ENCODE measurements at regions of chr14 and their contacts with region 1.

Region 1: GRCh38 chr14:81164167-81164774 is 56.5 kb downstream of the GTF2A1 start:
- DNase-seq: peak; percentile 83
- H3K4me3 Mint-ChIP-seq: no peak overlapping the region
- H3K27ac Mint-ChIP-seq: no peak overlapping the region
- H3K4me1 Mint-ChIP-seq: peaks cover 10% of the 10 kb centered on the region
- H3K27me3 Mint-ChIP-seq: no peaks in the 10 kb centered on the region

Region 2: DNA sequence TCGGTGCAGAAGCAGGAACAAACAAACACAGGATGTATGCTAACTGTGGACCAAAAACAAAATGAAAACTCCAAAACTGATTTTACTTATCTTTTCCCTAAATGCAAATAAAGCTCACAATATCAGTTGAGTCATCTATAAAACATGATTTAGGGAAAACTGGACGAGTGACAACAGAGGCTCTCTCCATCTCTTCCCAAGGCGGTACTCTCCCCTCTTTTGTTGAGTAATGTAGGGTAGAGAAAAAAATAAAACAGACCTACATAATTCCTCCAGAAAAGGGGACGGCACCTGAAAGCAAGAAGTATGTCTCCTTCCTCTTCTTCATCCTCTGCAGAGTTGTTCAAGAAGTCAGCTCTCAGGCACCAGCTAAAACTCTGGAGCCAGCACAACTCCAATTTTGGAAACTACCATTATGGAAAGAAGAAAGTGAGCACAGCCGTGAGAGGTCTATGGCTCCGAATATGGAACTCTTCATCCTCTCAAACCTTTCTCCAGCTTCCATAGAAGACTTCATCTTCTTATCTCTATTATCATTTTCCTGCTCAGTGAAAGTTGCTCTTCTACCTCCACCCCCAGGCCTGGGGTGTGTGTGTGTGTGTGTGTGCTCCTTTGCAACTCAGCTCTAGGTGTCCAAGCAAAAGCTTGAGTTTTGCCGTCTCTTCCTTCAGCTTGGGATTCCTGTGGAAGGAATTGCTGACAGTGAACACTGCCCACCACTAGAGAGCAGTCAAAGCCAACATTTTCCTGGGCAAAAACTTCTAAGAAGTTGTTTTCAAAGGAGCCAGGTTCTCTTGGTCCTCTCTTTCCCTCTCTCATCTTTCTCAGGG is 1108.4 kb before region 1 on chr14:
- CTCF ChIA-PET with region 1: no interaction called
- POLR2A ChIA-PET with region 1: no interaction called
- intact Hi-C with region 1: loop called (anchors 5 kb)
- DNase-seq: peak; percentile 9
- H3K4me3 Mint-ChIP-seq: no peak overlapping the region
- H3K27ac Mint-ChIP-seq: no peak overlapping the region
- H3K4me1 Mint-ChIP-seq: no peaks in the 10 kb centered on the region
- H3K27me3 Mint-ChIP-seq: no peaks in the 10 kb centered on the region

Region 3: GRCh38 chr14:80930836-80931389 is 233.4 kb before region 1 on chr14:
- CTCF ChIA-PET with region 1: no interaction called
- POLR2A ChIA-PET with region 1: no interaction called
- intact Hi-C with region 1: loop called (anchors 1 kb)
- DNase-seq: peak; percentile 80
- H3K4me3 Mint-ChIP-seq: peak overlapping the region; percentile 54
- H3K27ac Mint-ChIP-seq: peak overlapping the region; percentile 82
- H3K4me1 Mint-ChIP-seq: peaks cover 41% of the 10 kb centered on the region
- H3K27me3 Mint-ChIP-seq: no peaks in the 10 kb centered on the region

Region 4: GRCh38 chr14:80987235-80988032 is 176.8 kb before region 1 on chr14:
- CTCF ChIA-PET with region 1: interaction called, 41 read pairs
- POLR2A ChIA-PET with region 1: no interaction called
- intact Hi-C with region 1: loop called (anchors 1 kb)
- DNase-seq: peak; percentile 72
- H3K4me3 Mint-ChIP-seq: no peak overlapping the region
- H3K27ac Mint-ChIP-seq: no peak overlapping the region
- H3K4me1 Mint-ChIP-seq: no peaks in the 10 kb centered on the region
- H3K27me3 Mint-ChIP-seq: peaks cover 9% of the 10 kb centered on the region

Region 5: GRCh38 chr14:81127785-81128184 is 36.5 kb before region 1 on chr14:
- CTCF ChIA-PET with region 1: no interaction called
- POLR2A ChIA-PET with region 1: no interaction called
- intact Hi-C with region 1: no loop called
- DNase-seq: no peak
- H3K4me3 Mint-ChIP-seq: no peak overlapping the region
- H3K27ac Mint-ChIP-seq: no peak overlapping the region
- H3K4me1 Mint-ChIP-seq: no peaks in the 10 kb centered on the region
- H3K27me3 Mint-ChIP-seq: no peaks in the 10 kb centered on the region

Region 6: GRCh38 chr14:81153187-81153586 is 11.1 kb before region 1 on chr14:
- CTCF ChIA-PET with region 1: interaction called, 20 read pairs
- POLR2A ChIA-PET with region 1: no interaction called
- intact Hi-C with region 1: loop called (anchors 1 kb)
- DNase-seq: no peak
- H3K4me3 Mint-ChIP-seq: no peak overlapping the region
- H3K27ac Mint-ChIP-seq: no peak overlapping the region
- H3K4me1 Mint-ChIP-seq: peaks cover 11% of the 10 kb centered on the region
- H3K27me3 Mint-ChIP-seq: peaks cover 2% of the 10 kb centered on the region

Region 7: DNA sequence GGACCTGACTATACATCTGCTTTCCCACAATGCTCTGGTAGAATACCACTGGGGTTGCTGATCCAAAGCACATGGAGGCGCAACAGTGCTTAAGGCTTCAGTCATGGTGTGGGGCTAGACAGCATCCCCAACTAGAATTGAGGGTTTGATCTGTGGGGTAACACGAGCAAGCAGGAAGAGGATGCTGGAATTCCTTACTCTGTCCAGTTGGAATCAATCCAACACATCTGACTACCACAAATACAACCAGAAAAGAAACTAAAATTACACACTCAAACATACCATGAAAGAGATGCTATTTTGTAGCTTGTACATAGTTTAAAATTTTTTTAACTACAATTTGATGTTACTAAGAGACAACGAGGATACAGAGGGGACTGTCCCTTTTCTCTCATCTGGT is 96.9 kb after region 1 on chr14:
- CTCF ChIA-PET with region 1: no interaction called
- POLR2A ChIA-PET with region 1: no interaction called
- intact Hi-C with region 1: no loop called
- DNase-seq: no peak
- H3K4me3 Mint-ChIP-seq: no peak overlapping the region
- H3K27ac Mint-ChIP-seq: no peak overlapping the region
- H3K4me1 Mint-ChIP-seq: peaks cover 5% of the 10 kb centered on the region
- H3K27me3 Mint-ChIP-seq: peaks cover 24% of the 10 kb centered on the region

Region 8: DNA sequence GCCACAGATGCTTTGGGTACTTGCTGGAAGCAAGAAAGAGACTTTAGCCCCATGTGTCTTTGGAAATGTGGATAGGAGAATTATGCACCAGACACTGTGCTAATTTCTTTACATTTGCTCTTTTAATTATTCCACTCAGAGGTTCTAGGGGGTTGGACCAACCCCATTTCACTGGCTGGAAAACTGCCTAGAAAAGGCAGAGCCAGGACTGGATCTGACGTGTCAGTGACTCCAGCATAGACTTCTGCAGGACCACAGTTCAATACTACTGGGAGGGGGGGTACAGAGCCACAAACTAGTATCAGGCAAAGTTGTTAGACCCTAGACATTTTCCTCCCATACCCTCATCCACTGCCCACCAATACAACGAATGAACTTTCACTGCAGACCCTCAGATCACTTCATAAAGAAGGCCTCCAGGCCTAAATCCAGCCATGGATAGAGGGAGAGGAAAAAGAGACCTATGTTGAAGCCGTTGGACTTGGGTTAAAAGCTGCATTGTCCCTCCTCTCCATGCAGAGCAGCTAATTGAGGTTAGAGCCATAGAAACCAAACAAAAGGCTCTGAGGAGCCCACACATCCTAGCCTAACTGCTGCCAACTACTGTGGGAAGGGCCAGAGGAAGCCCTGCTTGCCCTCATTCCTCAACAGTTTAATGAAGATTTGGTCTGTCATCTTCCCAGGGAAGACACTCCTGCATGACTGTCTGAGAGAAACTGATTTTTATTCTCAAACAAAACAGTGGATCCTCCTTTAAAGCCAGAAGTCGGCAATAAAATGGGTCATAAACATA is 167.2 kb after region 1 on chr14:
- CTCF ChIA-PET with region 1: no interaction called
- POLR2A ChIA-PET with region 1: no interaction called
- intact Hi-C with region 1: no loop called
- DNase-seq: no peak
- H3K4me3 Mint-ChIP-seq: no peak overlapping the region
- H3K27ac Mint-ChIP-seq: no peak overlapping the region
- H3K4me1 Mint-ChIP-seq: no peaks in the 10 kb centered on the region
- H3K27me3 Mint-ChIP-seq: peaks cover 3% of the 10 kb centered on the region